PC-3 (cell line): ENCODE measurements at regions of chr1 and their contacts with region 1.

Region 1: DNA sequence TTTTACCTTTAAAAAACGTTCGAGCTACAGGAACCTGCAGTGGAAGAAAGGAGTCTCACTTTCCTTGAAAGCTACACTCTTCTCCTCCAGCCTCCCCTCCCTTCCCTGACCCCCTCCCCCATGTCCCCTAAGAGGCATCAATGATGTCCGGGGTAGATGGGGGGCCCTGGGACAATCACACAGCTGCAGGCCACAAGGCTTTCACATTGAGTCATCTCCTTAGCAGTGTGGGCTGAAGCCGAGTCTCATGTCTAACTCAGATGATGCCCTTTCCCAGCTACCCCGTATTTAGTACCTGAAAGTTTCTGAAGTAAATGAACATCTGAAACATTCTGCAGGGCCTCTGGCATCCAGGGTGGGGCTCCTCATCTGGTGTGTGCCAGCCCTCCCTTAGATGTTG is 6.3 kb upstream of the GPR25 start:
- DNase-seq: no peak
- ATAC-seq: peak; percentile 25
- H3K4me3 ChIP-seq: no peak overlapping the region
- H3K27ac ChIP-seq: no peak overlapping the region
- H3K4me1 ChIP-seq: no peaks in the 10 kb centered on the region
- H3K27me3 ChIP-seq: peaks cover 55% of the 10 kb centered on the region
- CTCF ChIP-seq: no peak

Region 2: GRCh38 chr1:200780545-200781369 is 85.8 kb before region 1 on chr1:
- CTCF ChIA-PET with region 1: no interaction called
- POLR2A ChIA-PET with region 1: interaction called, 12 read pairs
- intact Hi-C with region 1: no loop called
- DNase-seq: peak; percentile 32
- ATAC-seq: peak; percentile 71
- H3K4me3 ChIP-seq: peak overlapping the region; percentile 22; the same call in 1 of the 2 replicates
- H3K27ac ChIP-seq: no peak overlapping the region
- H3K4me1 ChIP-seq: 0 out of 2 replicates have a peak, but pooled peaks cover 3% of the 10 kb centered on the region
- H3K27me3 ChIP-seq: no peaks in the 10 kb centered on the region
- CTCF ChIP-seq: 0 out of 2 replicates have a peak, but pooled peaks have one; percentile 18

Region 3: GRCh38 chr1:201042779-201043461 is 176.4 kb after region 1 on chr1:
- CTCF ChIA-PET with region 1: no interaction called
- POLR2A ChIA-PET with region 1: no interaction called
- intact Hi-C with region 1: loop called (anchors 10 kb)
- DNase-seq: peak; percentile 92
- ATAC-seq: peak; percentile 94
- H3K4me3 ChIP-seq: no peak overlapping the region
- H3K27ac ChIP-seq: no peak overlapping the region
- H3K4me1 ChIP-seq: no peaks in the 10 kb centered on the region
- H3K27me3 ChIP-seq: peaks cover 15% of the 10 kb centered on the region
- CTCF ChIP-seq: peak; percentile 100